ENCODE measurements at regions of chr17 and their contacts with region 1.

Region 1: GRCh38 chr17:28854457-28855350 is at the start of gene ERAL1:
- DNase-seq: peak; percentile 90
- ATAC-seq: peak; percentile 99
- total RNA-seq, gene ERAL1: 23.0 TPM

Region 2: DNA sequence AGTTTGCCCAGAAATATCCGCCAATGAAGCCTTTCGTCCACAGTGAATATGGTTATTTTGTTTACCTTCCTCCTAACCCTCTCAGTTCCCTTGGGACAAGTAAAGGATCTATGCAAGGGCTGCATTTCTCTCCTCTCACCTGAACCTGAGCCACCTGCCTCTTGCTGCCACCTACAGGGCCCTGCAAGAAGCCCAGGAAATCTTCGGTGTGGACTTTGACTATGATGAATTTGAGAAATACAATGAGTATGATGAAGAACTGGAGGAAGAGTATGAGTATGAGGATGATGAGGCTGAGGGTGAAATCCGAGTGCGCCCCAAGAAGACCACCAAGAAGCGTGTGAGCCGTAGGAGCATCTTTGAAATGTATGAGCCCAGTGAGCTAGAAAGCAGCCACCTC is 178.7 kb before region 1 on chr17:
- intact Hi-C with region 1: no loop called
- DNase-seq: no peak
- ATAC-seq: no peak

Region 3: GRCh38 chr17:28839221-28839620 is 15.5 kb before region 1 on chr17:
- intact Hi-C with region 1: loop called (anchors 1 kb)
- DNase-seq: no peak
- ATAC-seq: no peak

Measured in sciatic nerve (tissue), 2 donors.